Right ventricle myocardium inferior (tissue), 1 donor: ENCODE measurements at regions of chr3 and their contacts with region 1.

Region 1: GRCh38 chr3:52770496-52771333 is at the start of gene NEK4:
- DNase-seq: peak; percentile 97
- ATAC-seq: peak; percentile 100
- total RNA-seq, gene NEK4: 20.4 TPM

Region 2: DNA sequence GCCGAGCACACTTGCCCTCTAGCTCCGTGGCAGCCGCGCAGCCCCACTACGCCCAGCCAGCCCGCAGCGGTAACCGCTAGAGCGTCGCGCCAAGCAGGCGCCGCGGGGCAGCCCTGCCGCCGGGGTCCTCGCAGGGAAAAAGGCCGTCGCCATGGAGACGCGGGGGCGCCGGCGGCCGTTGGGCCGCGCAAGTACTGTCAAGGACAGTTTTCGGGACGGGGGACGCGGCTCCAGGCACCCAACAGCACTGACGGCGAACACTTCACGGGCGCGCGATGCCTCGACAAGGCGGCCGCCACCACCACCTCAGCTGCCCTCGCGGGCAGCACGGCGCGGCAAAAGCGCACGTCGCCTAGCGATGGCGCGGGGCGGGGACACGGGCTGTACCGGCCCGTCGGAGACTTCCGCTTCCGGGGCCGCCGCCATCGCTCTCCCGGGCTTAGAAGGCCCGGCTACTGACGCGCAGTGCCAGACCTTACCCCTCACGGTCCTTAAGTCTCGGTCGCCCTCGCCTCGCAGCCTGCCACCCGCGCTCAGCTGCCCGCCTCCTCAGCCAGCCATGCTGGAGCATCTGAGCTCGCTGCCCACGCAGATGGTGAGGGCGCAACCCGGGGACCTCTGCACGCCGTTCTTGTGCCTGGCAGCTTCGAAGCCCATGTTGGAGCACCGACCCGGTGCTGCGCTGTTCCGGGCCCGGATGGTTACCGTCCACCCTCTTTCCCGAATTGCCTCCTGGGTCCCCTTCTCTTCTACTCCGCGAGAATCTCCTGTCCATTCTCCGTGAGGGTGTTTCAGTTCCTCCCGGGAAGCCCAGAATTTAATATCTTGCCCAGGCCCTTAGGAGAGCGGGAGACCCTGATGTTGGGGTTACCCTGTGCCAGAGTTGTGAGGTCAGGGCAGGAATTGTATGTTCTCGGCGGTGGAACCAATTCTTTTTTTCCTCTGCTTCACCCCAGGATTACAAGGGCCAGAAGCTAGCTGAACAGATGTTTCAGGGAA is 64.7 kb before region 1 on chr3 and contains the starts of genes GLT8D1 and SPCS1:
- intact Hi-C with region 1: loop called (anchors 5 kb)
- DNase-seq: peak; percentile 95
- ATAC-seq: peak; percentile 96
- total RNA-seq, gene GLT8D1: 33.2 TPM
- total RNA-seq, gene SPCS1: 85.0 TPM

Region 3: GRCh38 chr3:52897130-52898122 is 126.7 kb after region 1 on chr3 and contains the start of gene STIMATE:
- intact Hi-C with region 1: loop called (anchors 2 kb)
- DNase-seq: peak; percentile 95
- ATAC-seq: peak; percentile 99
- total RNA-seq, gene STIMATE: 9.0 TPM